Activated CD8-positive, alpha-beta T cell treated with anti-CD3 and anti-CD28 coated beads for 36 hours (primary cell): ENCODE measurements at regions of chr14 and their contacts with region 1.

Region 1: DNA sequence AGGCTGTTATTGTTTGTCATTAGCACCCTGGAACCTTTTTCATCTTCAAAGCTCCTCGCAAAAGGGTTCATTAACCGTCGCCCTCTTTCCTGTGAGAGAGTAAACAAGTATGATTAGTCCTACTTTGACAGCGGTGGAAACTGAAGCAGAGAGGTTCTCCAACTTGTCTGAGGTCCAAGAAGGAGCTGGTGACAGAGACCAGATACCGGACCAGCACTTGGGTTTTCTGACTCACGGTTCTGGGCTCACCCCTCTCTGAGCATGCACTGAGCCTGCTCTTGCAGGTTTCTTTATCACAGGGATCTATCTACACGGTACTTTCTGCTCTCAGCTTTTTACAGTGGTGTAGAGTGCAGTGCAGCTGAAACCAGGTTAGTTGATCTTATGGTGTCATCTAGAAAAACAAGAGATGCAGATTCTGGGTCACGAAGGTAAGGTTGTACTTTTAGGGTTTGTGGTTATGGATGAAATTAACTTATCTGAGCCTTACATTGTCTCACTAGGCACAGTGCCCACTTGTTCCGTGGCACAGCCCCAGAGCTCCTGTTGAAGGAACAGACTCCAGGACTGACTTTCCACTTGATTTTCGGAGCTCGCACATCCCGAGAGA is 62.1 kb downstream of the PPP2R5C start:
- DNase-seq: peak; percentile 88
- ATAC-seq: peak; percentile 68
- H3K4me3 Mint-ChIP-seq: peak overlapping the region; percentile 71
- H3K27ac Mint-ChIP-seq: peak overlapping the region; percentile 99
- H3K4me1 Mint-ChIP-seq: peaks cover 80% of the 10 kb centered on the region
- H3K27me3 Mint-ChIP-seq: no peaks in the 10 kb centered on the region
- CTCF ChIP-seq: no peak

Region 2: DNA sequence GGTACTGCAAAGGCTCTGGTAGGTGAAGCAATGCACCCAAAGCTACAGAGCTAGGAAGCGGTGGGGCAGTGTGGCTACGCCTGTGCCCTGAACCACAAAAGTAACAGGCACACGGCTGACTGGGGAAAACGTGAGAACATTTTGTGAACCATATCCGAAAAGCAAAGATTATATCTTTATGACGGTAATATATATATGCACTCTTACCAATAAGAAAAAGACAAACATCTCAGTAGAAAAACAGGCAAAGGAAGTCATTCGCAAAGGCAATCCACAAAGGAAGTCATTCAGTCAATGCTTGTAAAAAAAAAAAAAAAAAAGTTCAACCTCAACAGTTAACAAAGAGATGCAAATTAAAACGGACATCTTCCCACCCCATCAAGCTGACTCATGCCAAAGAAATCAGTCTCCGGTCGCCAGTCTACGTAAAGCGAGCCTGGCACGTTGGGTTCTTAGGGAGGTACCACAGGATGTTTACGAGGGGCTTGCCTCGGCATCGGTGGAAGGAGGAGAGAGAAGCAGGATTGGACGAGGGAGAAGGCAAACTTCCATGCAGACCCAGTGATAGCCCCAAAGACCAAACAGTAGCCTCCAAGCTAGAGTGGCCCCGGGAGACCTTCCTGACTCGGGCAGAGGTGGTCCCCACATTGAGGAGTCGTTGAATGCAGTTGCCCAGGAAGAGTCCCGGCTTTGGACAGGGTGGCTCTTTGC is 101.5 kb before region 1 on chr14:
- CTCF ChIA-PET with region 1: no interaction called
- POLR2A ChIA-PET with region 1: interaction called, 12 read pairs
- intact Hi-C with region 1: no loop called
- DNase-seq: peak; percentile 87
- ATAC-seq: peak; percentile 89
- H3K4me3 Mint-ChIP-seq: peak overlapping the region; percentile 63
- H3K27ac Mint-ChIP-seq: peak overlapping the region; percentile 95
- H3K4me1 Mint-ChIP-seq: peaks cover 37% of the 10 kb centered on the region
- H3K27me3 Mint-ChIP-seq: no peaks in the 10 kb centered on the region
- CTCF ChIP-seq: no peak

Region 3: DNA sequence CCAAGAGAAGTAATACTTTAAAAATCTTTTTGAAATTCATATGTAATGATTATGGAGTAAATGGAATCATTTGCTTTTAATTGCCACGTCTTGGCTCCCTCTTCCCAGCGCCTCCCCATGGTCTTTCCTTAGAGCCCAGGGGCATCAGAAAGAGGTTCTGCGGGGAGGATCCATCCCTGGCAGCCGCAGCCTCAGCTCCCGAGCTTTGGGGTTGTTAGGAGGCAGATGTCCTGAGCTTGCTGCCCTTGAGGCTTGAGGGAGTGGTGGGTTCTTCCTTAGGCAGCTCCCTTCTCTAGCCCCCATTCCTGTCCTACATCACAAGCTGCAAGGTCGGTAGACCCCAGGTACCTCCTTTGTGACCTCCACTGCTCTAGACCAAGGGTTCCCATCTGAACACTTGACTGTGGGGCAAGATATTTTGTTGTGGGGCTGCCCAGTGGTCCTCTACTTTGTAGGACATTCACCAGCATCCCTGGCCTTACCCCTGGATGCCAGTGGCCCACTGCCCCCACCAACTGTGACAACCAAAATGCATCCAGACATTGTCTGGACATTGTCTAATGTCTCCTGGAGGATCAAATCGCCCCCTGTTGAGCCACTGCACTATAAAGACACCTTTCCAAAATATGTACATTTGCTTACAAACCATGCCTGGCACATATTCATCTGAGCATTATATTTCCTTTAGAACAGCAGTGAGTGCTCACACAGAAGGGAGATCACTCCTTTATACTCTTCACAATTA is 55.8 kb before region 1 on chr14:
- CTCF ChIA-PET with region 1: interaction called, 29 read pairs
- POLR2A ChIA-PET with region 1: interaction called, 17 read pairs
- intact Hi-C with region 1: loop called (anchors 5 kb)
- DNase-seq: no peak
- ATAC-seq: no peak
- H3K4me3 Mint-ChIP-seq: no peak overlapping the region
- H3K27ac Mint-ChIP-seq: no peak overlapping the region
- H3K4me1 Mint-ChIP-seq: peaks cover 39% of the 10 kb centered on the region
- H3K27me3 Mint-ChIP-seq: no peaks in the 10 kb centered on the region
- CTCF ChIP-seq: no peak

Region 4: DNA sequence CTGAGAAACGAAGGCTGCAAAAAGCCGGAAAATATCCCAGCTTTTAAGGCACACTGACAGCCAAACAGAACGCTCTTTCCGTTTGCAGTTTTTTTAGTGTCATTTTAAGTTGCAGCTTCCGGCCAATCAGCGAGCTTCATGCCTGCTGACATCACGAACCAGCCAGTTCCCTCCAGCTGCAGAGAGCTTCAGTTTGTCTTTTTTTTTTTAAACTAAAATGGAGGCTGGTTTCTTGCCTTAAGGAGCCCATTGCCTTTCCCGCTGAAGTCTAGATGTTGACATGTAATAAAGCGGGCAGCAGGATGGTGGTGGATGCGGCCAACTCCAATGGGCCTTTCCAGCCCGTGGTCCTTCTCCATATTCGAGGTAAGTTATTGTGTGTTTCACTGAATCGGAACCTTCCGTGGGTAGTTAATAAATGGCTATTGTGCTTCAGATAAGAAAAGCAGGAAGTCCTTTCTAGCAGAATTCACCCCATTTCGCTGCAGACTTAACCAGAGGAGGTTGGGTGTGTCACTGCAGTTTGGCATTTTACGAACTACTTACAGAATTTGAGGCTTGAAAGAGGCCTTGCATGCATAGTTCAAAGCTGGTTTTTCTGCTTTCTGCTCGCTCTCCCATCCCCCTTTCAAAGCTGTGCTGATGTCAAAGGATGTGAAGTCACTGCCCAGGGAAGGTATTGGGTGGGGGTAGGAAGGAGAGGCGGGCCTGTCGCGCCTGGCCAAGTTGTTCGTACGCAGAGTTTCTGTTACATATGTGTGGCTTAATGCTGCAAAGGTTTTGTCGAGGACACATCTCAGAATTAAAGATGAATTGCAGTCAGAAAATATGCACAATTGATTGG is 13.7 kb before region 1 on chr14:
- CTCF ChIA-PET with region 1: interaction called, 15 read pairs
- POLR2A ChIA-PET with region 1: interaction called, 225 read pairs
- intact Hi-C with region 1: no loop called
- DNase-seq: peak; percentile 92
- ATAC-seq: peak; percentile 90
- H3K4me3 Mint-ChIP-seq: peak overlapping the region; percentile 79
- H3K27ac Mint-ChIP-seq: peak overlapping the region; percentile 95
- H3K4me1 Mint-ChIP-seq: peaks cover 38% of the 10 kb centered on the region
- H3K27me3 Mint-ChIP-seq: no peaks in the 10 kb centered on the region
- CTCF ChIP-seq: no peak

Region 5: DNA sequence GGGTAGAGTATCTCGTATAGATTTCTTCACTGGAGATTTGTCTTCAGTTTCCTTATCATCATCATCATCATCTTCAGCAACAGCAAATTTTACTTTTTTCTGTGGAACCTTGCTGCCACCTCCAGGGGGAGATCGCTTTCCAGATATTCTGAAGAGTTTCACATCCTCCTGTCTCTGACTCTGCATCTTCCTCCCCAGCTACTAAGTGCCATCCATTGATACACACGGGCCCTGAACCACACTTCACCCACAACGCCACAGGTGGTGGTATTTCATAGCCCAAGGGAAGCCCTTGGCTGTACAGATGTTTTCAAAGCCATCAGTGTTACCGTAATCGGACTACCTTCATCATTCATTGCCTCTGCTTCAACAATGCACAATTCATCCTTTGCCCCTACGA is 20.0 kb after region 1 on chr14:
- CTCF ChIA-PET with region 1: interaction called, 6 read pairs
- POLR2A ChIA-PET with region 1: interaction called, 13 read pairs
- intact Hi-C with region 1: no loop called
- DNase-seq: peak; percentile 81
- ATAC-seq: peak; percentile 65
- H3K4me3 Mint-ChIP-seq: no peak overlapping the region
- H3K27ac Mint-ChIP-seq: peak overlapping the region; percentile 79
- H3K4me1 Mint-ChIP-seq: peaks cover 82% of the 10 kb centered on the region
- H3K27me3 Mint-ChIP-seq: no peaks in the 10 kb centered on the region
- CTCF ChIP-seq: peak; percentile 64

Region 6: GRCh38 chr14:101932673-101933072 is 109.1 kb after region 1 on chr14:
- CTCF ChIA-PET with region 1: no interaction called
- POLR2A ChIA-PET with region 1: no interaction called
- intact Hi-C with region 1: no loop called
- DNase-seq: no peak
- ATAC-seq: no peak
- H3K4me3 Mint-ChIP-seq: no peak overlapping the region
- H3K27ac Mint-ChIP-seq: no peak overlapping the region
- H3K4me1 Mint-ChIP-seq: no peaks in the 10 kb centered on the region
- H3K27me3 Mint-ChIP-seq: no peaks in the 10 kb centered on the region
- CTCF ChIP-seq: no peak

Region 7: DNA sequence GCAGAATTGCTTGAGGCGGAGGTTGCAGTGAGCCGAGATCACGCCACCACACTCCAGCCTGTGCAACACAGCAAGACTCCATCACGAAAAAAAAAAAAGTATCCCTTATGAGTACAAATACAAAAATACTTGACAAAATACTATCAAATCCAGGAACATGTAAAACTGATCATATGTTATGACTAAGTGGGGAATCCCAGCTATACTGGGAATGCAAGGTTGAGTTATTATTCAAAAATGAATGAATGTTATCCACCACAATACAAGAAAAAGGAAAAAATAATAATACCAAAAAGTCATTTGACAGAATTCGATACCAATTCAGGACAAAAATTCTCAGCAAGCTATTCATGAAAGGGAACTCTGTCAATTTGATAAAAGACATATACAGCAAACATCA is 448.8 kb after region 1 on chr14:
- CTCF ChIA-PET with region 1: no interaction called
- POLR2A ChIA-PET with region 1: no interaction called
- intact Hi-C with region 1: no loop called
- DNase-seq: no peak
- ATAC-seq: no peak
- H3K4me3 Mint-ChIP-seq: no peak overlapping the region
- H3K27ac Mint-ChIP-seq: no peak overlapping the region
- H3K4me1 Mint-ChIP-seq: no peaks in the 10 kb centered on the region
- H3K27me3 Mint-ChIP-seq: no peaks in the 10 kb centered on the region
- CTCF ChIP-seq: no peak